ENCODE measurements at regions of chr21 and their contacts with region 1.

Region 1: DNA sequence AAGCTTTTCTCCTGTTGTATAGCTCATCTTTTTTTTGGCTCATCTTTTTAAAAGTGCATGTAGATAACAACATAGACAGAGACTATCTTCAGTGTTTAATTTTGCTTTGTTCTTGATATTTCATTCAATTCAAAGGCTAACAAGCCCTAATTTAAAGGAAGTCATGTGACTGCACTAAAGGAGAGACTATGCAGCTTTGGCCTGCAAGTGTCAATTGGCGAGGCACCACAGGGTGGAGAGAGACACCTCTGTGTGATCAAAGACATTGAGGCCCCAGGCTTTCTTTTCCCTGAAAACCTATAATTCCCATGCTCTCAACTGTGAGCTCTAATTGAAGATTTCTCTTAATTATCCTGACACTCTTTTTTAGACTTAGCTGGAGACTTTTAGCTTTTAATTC is 53.6 kb downstream of the CHODL start:
- DNase-seq: peak; percentile 3
- H3K4me3 ChIP-seq: no peak overlapping the region
- H3K27ac ChIP-seq: no peak overlapping the region
- H3K4me1 ChIP-seq: no peaks in the 10 kb centered on the region
- H3K27me3 ChIP-seq: no peaks in the 10 kb centered on the region
- CTCF ChIP-seq: no peak

Region 2: DNA sequence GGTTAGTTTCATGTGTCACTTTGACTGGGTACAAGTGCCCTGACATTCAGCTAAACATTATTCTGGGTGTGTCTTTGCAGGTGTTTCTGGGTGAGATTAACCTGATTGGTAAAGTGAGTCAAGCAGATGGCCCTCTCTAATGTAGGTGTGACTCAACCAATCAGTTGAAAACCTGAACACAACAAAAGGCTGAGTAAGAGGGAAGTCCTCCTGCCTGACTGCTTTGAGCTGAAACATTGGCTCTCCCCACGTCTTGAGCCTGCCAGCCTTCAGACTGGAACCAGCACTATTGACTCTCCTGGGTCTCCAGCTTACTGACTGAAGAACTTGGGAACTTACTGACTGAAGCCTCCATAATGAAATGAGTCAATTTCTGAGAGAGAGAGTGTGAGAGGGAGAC is 409.1 kb before region 1 on chr21:
- CTCF ChIA-PET with region 1: no interaction called
- POLR2A ChIA-PET with region 1: no interaction called
- intact Hi-C with region 1: no loop called
- DNase-seq: no peak
- H3K4me3 ChIP-seq: no peak overlapping the region
- H3K27ac ChIP-seq: no peak overlapping the region
- H3K4me1 ChIP-seq: no peaks in the 10 kb centered on the region
- H3K27me3 ChIP-seq: no peaks in the 10 kb centered on the region
- CTCF ChIP-seq: no peak

Region 3: GRCh38 chr21:18951271-18952065 is 653.2 kb after region 1 on chr21:
- CTCF ChIA-PET with region 1: no interaction called
- POLR2A ChIA-PET with region 1: no interaction called
- intact Hi-C with region 1: loop called (anchors 10 kb)
- DNase-seq: peak; percentile 64
- H3K4me3 ChIP-seq: no peak overlapping the region
- H3K27ac ChIP-seq: no peak overlapping the region
- H3K4me1 ChIP-seq: no peaks in the 10 kb centered on the region
- H3K27me3 ChIP-seq: no peaks in the 10 kb centered on the region
- CTCF ChIP-seq: peak; percentile 59

Measured in A673 (cell line).